HepG2 (cell line): ENCODE measurements at regions of chr10 and their contacts with region 1.

Region 1: DNA sequence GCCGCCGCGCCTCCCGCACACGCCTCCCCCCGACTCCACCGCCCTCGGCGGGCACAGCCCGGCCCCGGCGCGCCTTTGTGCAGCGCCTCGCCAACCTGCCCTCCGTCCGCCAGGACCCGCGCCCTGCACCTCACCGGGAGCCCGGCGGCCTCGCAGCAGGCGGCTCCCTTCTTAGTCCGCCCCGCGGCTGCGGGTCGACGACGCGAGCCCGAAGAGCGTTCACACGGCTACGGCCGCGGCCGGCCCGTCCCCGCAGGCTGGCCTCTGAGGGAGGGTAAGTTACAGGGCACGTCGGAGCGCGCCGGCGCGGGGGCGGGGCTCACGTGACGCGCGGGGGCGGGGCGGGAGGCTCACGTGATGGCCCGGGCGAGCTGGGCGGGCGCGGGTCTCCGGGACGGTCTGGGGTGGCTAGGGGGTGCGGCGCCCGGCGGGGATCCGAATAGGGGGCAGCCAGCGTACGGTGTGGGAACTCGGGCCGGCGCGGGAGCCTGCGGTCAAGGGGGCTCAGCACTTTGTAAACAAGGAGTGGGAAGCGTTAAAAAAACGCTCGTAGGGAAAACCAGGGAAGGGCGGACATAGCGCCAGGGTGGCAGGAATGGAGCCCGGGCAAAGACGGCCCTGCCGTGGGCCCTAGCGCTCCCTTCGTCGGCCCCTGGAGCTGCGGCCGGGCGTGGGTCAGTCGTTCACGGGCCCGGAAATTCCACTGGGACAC is at the start of gene ARHGAP12:
- DNase-seq: peak; percentile 74
- ATAC-seq: peak; percentile 83
- H3K4me3 ChIP-seq: peak within 1 kb of the TSS; percentile 68 to 97 (median 97)
- H3K27ac ChIP-seq: peak within 1 kb of the TSS; percentile 97
- H3K4me1 ChIP-seq: peaks cover 43% of the 10 kb centered on the region
- H3K27me3 ChIP-seq: no peaks in the 10 kb centered on the region; a peak in 1 of 5 replicates
- CTCF ChIP-seq: no peak
- EP300 ChIP-seq: 0 out of 4 replicates have a peak, but pooled peaks of 1 of the 2 experiments have one; percentile 7
- POLR2A ChIP-seq: peak; percentile 78 to 81
- RAD21 ChIP-seq: no peak
- total RNA-seq, gene ARHGAP12: 54.6 and 64.4 TPM in 2 replicates

Region 2: DNA sequence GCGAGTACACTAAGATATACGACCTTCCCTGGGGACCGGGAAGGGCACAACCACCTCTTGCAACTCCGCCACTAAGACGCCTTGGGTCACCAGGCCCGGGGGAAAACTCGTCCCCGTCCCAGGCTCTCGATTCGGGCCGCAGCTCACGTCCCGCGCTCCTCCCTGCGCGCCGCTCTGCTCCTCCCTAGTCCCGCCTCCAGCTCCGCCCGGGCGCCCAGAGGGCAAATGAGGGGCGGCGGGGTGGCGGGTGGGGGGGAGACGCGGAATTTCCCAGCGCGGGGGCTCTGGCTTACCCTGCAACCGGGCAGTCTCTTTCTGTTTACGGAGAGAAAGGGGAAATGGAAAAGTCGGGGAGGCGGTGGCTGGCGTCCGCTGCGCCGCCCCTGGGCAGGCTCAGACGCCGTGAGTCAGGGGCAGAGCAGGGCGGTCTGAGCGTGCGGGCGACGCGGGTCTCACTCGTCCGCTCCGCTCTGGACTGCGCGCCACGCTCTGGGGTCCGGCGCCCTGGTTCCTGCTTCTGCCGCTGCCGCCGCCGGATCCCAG is 1494.9 kb before region 1 on chr10 and contains the start of gene MAP3K8:
- CTCF ChIA-PET with region 1: no interaction called
- POLR2A ChIA-PET with region 1: no interaction called
- in situ Hi-C with region 1: loop called (anchors 25 kb)
- intact Hi-C with region 1: no loop called
- DNase-seq: peak; percentile 89
- ATAC-seq: peak; percentile 89
- H3K4me3 ChIP-seq: peak within 1 kb of the TSS; percentile 93 to 97 (median 96)
- H3K27ac ChIP-seq: peak within 1 kb of the TSS; percentile 97
- H3K4me1 ChIP-seq: peaks cover 50% of the 10 kb centered on the region
- H3K27me3 ChIP-seq: no peaks in the 10 kb centered on the region; a peak in 1 of 5 replicates
- CTCF ChIP-seq: peak; percentile 22; the same call in 1 of the 2 replicates
- EP300 ChIP-seq: peak in 1 of 2 experiments; percentile 42; a peak in 2 of 4 replicates
- POLR2A ChIP-seq: peak; percentile 77 to 78
- RAD21 ChIP-seq: peak; percentile 52; the same call in 1 of the 2 replicates
- total RNA-seq, gene MAP3K8: 19.3 and 21.8 TPM in 2 replicates

Region 3: GRCh38 chr10:31864834-31865518 is 63.7 kb before region 1 on chr10:
- CTCF ChIA-PET with region 1: no interaction called
- POLR2A ChIA-PET with region 1: interaction called, 4 read pairs
- in situ Hi-C with region 1: no loop called
- intact Hi-C with region 1: loop called (anchors 5 kb)
- DNase-seq: peak; percentile 48
- ATAC-seq: peak; percentile 74
- H3K4me3 ChIP-seq: peak overlapping the region in 2 of 3 experiments; percentile 7 to 25; a peak in 1 of 6 replicates
- H3K27ac ChIP-seq: peak overlapping the region; percentile 51
- H3K4me1 ChIP-seq: peaks cover 52% of the 10 kb centered on the region
- H3K27me3 ChIP-seq: no peaks in the 10 kb centered on the region; a peak in 1 of 5 replicates
- CTCF ChIP-seq: no peak
- EP300 ChIP-seq: no peak
- POLR2A ChIP-seq: no peak
- RAD21 ChIP-seq: no peak

Region 4: DNA sequence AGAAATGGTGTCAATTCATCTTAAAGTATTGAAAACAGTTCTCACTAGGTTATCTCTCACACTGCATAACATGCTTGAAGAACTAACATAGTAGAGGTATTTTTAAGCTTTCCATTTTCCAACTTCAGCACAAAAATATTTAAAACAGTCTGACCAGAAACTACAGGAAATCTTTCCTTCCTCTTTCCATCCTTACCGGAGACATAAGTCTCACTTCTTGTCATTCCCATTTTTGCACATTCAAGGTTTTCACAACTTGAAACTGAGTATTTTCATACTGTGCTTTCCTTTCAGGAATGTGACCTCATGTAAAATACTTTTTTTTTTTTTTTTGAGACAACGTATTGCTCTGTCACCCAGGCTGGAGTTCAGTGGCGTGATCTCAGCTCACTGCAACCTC is 45.3 kb before region 1 on chr10:
- CTCF ChIA-PET with region 1: no interaction called
- POLR2A ChIA-PET with region 1: interaction called, 5 read pairs
- in situ Hi-C with region 1: no loop called
- intact Hi-C with region 1: loop called (anchors 5 kb)
- DNase-seq: no peak
- ATAC-seq: no peak
- H3K4me3 ChIP-seq: no peak overlapping the region
- H3K27ac ChIP-seq: peak overlapping the region; percentile 11
- H3K4me1 ChIP-seq: peaks cover 81% of the 10 kb centered on the region
- H3K27me3 ChIP-seq: no peaks in the 10 kb centered on the region
- CTCF ChIP-seq: no peak
- EP300 ChIP-seq: no peak
- POLR2A ChIP-seq: no peak
- RAD21 ChIP-seq: no peak

Region 5: GRCh38 chr10:31940839-31941653 is 12.3 kb after region 1 on chr10:
- CTCF ChIA-PET with region 1: no interaction called
- POLR2A ChIA-PET with region 1: interaction called, 37 read pairs
- in situ Hi-C with region 1: no loop called
- intact Hi-C with region 1: loop called (anchors 2 kb)
- DNase-seq: peak; percentile 96
- ATAC-seq: peak; percentile 86
- H3K4me3 ChIP-seq: peak overlapping the region in 1 of 3 experiments; percentile 15; a peak in 2 of 6 replicates
- H3K27ac ChIP-seq: peak overlapping the region; percentile 77
- H3K4me1 ChIP-seq: peaks cover 99% of the 10 kb centered on the region
- H3K27me3 ChIP-seq: no peaks in the 10 kb centered on the region
- CTCF ChIP-seq: no peak
- EP300 ChIP-seq: peak in 1 of 2 experiments; percentile 93; a peak in 2 of 4 replicates
- POLR2A ChIP-seq: no peak
- RAD21 ChIP-seq: no peak

Region 6: DNA sequence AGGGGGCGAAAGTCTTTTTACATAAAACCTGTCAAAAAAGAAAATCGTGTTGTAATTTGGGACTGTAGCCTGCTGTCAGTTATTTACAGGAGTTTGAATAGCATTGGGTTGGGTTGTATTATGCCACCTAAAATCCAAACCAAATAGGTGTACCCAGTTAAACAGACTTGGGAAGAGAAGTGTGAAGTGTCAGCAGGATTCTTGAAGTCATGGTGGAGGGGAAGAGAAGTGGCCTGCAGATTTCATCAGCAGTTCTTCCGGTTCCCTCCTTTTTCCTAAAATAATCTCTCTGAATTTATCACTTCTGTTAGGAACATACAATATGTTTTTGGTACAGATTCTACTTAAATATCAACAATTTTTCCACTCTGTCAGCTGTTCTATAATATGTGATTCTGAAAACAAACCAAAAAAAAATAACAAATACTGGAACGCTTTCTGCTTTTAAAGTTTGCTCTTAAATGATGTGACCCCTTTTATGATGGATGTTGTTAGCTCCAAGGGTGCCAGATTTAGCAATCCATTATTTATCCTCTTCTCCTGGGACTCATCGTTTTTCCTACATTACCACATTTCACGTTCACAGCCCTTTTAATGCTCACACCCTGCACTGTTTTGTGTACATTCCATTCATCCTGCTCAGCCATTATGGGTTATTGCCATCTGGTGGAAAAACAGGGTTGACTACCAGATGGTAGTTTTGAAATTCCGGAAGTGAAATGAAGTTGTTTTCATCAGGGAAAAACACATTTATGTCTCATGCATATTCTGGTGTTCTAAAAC is 18.6 kb after region 1 on chr10:
- CTCF ChIA-PET with region 1: interaction called, 4 read pairs
- POLR2A ChIA-PET with region 1: interaction called, 37 read pairs
- in situ Hi-C with region 1: no loop called
- intact Hi-C with region 1: loop called (anchors 2 kb)
- DNase-seq: peak; percentile 82
- ATAC-seq: peak; percentile 87
- H3K4me3 ChIP-seq: no peak overlapping the region
- H3K27ac ChIP-seq: peak overlapping the region; percentile 33
- H3K4me1 ChIP-seq: peaks cover 64% of the 10 kb centered on the region
- H3K27me3 ChIP-seq: no peaks in the 10 kb centered on the region
- CTCF ChIP-seq: peak; percentile 85
- EP300 ChIP-seq: peak in 1 of 2 experiments; percentile 42; a peak in 2 of 4 replicates
- POLR2A ChIP-seq: no peak
- RAD21 ChIP-seq: peak; percentile 85

Region 7: GRCh38 chr10:32005050-32005449 is 76.3 kb after region 1 on chr10:
- CTCF ChIA-PET with region 1: no interaction called
- POLR2A ChIA-PET with region 1: interaction called, 3 read pairs
- in situ Hi-C with region 1: no loop called
- intact Hi-C with region 1: loop called (anchors 5 kb)
- DNase-seq: peak; percentile 58
- ATAC-seq: peak; percentile 76
- H3K4me3 ChIP-seq: no peak overlapping the region
- H3K27ac ChIP-seq: no peak overlapping the region
- H3K4me1 ChIP-seq: 0 out of 2 replicates have a peak, but pooled peaks cover 9% of the 10 kb centered on the region
- H3K27me3 ChIP-seq: no peaks in the 10 kb centered on the region
- CTCF ChIP-seq: peak; percentile 66
- EP300 ChIP-seq: no peak
- POLR2A ChIP-seq: peak in 1 of 2 experiments; percentile 24; a peak in 2 of 4 replicates
- RAD21 ChIP-seq: peak; percentile 34; the same call in 1 of the 2 replicates